Transverse colon (tissue), 4 donors: ENCODE measurements at regions of chr12 and their contacts with region 1.

Region 1: DNA sequence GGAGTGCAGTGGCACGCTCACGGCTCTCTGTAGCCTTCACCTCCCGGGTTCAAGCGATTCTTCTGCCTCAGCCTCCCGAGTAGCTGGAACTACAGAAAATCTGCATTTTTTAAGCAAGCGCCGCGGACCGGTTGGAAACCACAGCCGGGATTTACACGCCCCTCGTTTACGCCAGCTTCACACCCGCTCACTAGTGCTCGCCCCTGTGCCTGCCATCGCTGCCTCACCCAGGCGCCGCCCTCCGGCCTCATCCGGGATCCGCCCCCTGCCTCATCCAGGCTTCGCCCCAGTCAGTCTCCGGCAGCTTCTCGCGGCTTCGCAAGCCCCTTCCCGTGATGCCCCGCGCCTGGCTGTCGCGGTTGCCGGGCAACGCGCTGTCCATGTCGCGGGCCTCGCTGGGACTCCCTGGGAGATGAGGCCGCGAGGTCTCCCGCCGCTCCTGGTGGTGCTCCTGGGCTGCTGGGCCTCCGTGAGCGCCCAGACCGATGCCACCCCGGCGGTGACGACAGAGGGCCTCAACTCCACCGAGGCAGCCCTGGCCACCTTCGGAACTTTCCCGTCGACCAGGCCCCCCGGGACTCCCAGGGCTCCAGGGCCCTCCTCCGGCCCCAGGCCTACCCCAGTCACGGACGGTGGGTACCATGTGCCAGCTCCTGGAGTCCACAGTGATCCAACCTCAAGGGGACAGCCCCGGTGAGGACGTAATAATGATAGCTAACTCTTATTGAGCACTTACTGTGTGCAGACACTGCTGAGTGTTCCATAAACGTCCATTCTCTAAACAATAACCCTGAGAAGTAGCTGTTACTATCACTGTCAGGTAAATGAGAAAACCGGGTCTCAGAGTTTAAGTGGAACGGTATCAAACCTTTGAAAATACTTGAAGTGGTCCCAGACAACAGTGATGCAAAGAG is at the start of gene TCTN1:
- DNase-seq: peak; percentile 97
- H3K4me3 ChIP-seq: peak within 1 kb of the TSS; percentile 51 to 89 (median 65)
- H3K27ac ChIP-seq: peak within 1 kb of the TSS; percentile 68 to 82 (median 74)
- H3K4me1 ChIP-seq: peaks cover 5 to 12% (median 6%) of the 10 kb centered on the region in 4 donors
- H3K27me3 ChIP-seq: no peaks in the 10 kb centered on the region
- CTCF ChIP-seq: peak in 1 of 5 experiments; percentile 16
- EP300 ChIP-seq: no peak
- POLR2A ChIP-seq: peak; percentile 46
- total RNA-seq, gene TCTN1: 28.5 to 71.2 (median 35.1) TPM

Region 2: GRCh38 chr12:110079477-110080400 is 534.3 kb before region 1 on chr12:
- in situ Hi-C with region 1: loop called in 1 of 4 experiments (anchors 25 kb)
- intact Hi-C with region 1: no loop called
- DNase-seq: peak; percentile 63
- H3K4me3 ChIP-seq: peak overlapping the region in 1 of 4 donors; percentile 22
- H3K27ac ChIP-seq: peak overlapping the region; percentile 12 to 70 (median 42)
- H3K4me1 ChIP-seq: peaks cover 0 to 17% (median 6%) of the 10 kb centered on the region in 4 donors
- H3K27me3 ChIP-seq: no peaks in the 10 kb centered on the region
- CTCF ChIP-seq: no peak
- EP300 ChIP-seq: no peak
- POLR2A ChIP-seq: peak; percentile 11

Region 3: DNA sequence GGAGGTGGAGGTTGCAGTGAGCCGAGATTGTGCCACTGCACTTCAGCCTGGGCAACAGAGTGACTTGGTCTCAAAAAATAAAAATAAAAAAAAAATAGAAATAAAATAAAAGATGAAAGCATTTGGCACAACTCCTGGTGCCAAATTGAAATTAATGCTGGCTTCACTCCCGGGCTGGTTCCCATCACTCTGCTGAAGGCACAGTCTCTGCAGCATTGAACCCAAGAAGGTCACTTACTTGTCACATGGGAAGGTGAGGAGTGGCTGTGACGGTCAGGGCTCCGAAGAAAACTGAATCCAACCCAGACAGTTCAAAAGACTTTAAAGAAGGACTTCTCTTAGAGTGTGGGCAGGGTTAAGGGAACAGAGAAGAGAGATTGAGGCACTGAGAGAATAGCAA is 222.3 kb after region 1 on chr12:
- in situ Hi-C with region 1: loop called in 1 of 4 experiments (anchors 10 kb)
- intact Hi-C with region 1: no loop called
- DNase-seq: no peak
- H3K4me3 ChIP-seq: no peak overlapping the region
- H3K27ac ChIP-seq: no peak overlapping the region
- H3K4me1 ChIP-seq: no peaks in the 10 kb centered on the region
- H3K27me3 ChIP-seq: no peaks in the 10 kb centered on the region
- CTCF ChIP-seq: no peak
- EP300 ChIP-seq: no peak
- POLR2A ChIP-seq: no peak